B cell (primary cell): ENCODE measurements at regions of chr14 and their contacts with region 1.

Region 1: DNA sequence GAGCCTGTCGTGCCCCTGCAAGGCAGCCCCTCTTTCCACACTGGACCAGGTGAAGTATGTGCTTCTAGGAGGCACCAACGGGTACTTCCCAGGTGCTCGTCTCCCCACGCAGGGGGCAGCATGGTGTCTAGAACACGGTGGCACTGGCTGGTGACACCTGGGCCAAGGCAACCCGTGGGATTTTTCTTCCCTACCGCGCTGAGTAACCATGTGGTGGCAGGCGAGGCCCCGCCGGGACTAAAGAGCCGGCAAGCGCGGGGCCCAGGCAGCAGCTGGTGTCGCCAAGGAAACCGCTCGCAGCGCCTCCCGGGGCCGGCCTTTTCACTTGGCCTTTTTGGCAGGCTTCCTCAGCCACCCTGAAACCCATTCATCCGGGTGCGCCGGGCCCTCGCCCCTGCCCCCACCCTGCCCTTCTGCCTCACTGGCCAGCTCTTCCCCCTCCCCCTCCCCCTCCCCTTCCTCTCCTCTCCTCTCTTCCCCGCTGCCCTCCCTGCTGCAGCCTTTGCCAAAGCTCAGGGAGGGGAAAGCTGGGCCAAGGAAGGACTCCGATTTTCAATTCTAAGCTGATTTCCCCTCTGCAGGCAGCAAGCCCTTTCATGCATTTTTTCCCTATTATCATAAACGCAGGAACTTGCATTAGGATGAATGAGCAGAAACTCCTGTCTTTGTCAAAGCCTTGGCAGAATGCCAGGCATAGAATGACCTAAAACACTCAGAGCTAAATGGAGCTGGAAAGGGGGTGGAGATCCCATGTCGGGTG is 81.2 kb downstream of the IRF2BPL start:
- DNase-seq: peak; percentile 90
- ATAC-seq: peak; percentile 95
- H3K4me3 ChIP-seq: peak overlapping the region in 1 of 5 experiments; percentile 24
- H3K4me3 Mint-ChIP-seq: peak overlapping the region; percentile 64
- H3K27ac ChIP-seq: no peak overlapping the region
- H3K27ac Mint-ChIP-seq: peak overlapping the region; percentile 56
- H3K4me1 ChIP-seq: peaks cover 11 to 15% of the 10 kb centered on the region in 2 donors
- H3K4me1 Mint-ChIP-seq: peaks cover 17% of the 10 kb centered on the region
- H3K27me3 ChIP-seq: no peaks in the 10 kb centered on the region
- H3K27me3 Mint-ChIP-seq: no peaks in the 10 kb centered on the region
- CTCF ChIP-seq: peak; percentile 67

Region 2: GRCh38 chr14:76918751-76919543 is 28.3 kb before region 1 on chr14:
- CTCF ChIA-PET with region 1: interaction called, 17 read pairs
- POLR2A ChIA-PET with region 1: interaction called, 4 read pairs
- intact Hi-C with region 1: no loop called
- DNase-seq: no peak
- ATAC-seq: no peak
- H3K4me3 ChIP-seq: no peak overlapping the region
- H3K4me3 Mint-ChIP-seq: no peak overlapping the region
- H3K27ac ChIP-seq: no peak overlapping the region
- H3K27ac Mint-ChIP-seq: no peak overlapping the region
- H3K4me1 ChIP-seq: peaks cover 24 to 25% of the 10 kb centered on the region in 2 donors
- H3K4me1 Mint-ChIP-seq: peaks cover 20% of the 10 kb centered on the region
- H3K27me3 ChIP-seq: peaks cover 0 to 33% (median 5%) of the 10 kb centered on the region in 4 experiments
- H3K27me3 Mint-ChIP-seq: peaks cover 22% of the 10 kb centered on the region
- CTCF ChIP-seq: no peak

Region 3: DNA sequence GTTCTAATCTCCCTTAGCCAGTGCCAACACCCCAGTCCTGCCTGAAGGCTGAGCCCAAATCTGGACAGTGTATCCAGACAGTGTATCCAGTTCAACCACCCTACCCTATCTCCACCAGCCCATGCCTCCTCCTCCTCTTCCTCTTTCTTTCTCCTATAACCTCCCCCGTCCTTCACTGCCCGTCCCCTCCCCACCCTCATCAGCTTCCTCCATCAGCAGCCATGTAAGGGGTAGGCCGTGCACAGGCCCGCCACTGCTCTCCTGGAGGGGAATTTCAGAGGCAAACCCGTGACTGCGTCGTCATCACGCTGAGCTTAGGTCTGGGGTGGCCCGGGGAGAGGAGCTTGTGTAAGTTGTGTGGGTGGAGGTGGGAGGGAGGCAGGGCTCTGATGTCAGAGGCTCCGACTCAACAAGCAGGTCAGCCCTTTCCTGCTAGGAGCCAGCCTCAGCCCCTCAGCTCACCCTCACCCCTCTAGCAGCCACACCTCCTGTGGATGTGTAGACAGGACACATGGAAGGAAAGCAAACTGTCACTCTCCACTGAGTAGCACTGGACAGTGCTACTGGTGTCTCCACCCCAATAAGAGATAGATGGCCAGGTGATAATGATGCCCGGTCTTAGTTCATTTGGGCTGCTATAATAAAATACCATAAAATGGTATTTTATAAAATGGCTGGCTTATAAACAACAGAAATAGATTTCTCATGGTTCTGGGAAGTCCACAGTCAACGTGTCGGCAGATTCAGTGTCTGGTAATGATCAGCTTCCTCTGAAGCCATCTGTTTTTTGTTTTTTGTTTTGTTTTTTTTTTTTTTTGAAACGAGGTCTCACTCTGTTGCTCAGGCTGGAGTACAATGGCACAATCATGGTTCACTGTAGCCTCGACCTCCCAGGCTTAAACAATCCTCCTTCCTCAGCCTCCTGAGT is 30.8 kb after region 1 on chr14:
- CTCF ChIA-PET with region 1: interaction called, 11 read pairs
- POLR2A ChIA-PET with region 1: no interaction called
- intact Hi-C with region 1: loop called (anchors 5 kb)
- DNase-seq: peak; percentile 96
- ATAC-seq: peak; percentile 94
- H3K4me3 ChIP-seq: no peak overlapping the region
- H3K4me3 Mint-ChIP-seq: peak overlapping the region; percentile 79
- H3K27ac ChIP-seq: peak overlapping the region; percentile 75 to 82
- H3K27ac Mint-ChIP-seq: peak overlapping the region; percentile 93
- H3K4me1 ChIP-seq: peaks cover 18 to 25% of the 10 kb centered on the region in 2 donors
- H3K4me1 Mint-ChIP-seq: peaks cover 25% of the 10 kb centered on the region
- H3K27me3 ChIP-seq: no peaks in the 10 kb centered on the region
- H3K27me3 Mint-ChIP-seq: no peaks in the 10 kb centered on the region
- CTCF ChIP-seq: no peak

Region 4: DNA sequence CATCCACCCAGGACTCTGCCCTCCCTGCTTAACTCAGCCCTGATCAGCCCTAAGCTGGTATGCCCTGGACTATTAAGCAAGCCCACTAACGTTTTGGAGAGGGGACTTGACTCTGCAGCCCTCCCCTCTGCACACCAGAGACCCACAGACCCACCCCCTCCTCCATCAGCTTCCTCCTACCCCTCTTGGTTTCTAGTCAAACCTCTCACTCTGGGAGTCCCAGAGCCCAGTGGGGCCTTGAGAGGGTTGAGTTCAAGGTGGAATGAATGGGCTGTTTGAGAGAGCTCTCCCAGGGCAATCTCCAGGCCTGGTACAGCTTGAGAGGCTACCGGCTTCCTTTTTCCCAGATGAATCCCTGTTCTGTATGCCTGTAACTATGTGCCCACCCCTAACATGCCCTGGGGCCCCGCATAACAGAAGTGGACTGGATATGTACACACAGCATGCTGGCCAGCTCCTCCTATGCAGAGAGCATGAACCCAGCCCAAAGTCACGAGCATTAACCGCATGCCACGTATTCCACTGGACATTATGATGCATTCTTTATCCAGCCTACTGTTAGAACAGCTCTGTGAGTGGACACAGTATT is 37.6 kb after region 1 on chr14:
- CTCF ChIA-PET with region 1: interaction called, 4 read pairs
- POLR2A ChIA-PET with region 1: no interaction called
- intact Hi-C with region 1: loop called (anchors 5 kb)
- DNase-seq: no peak
- ATAC-seq: no peak
- H3K4me3 ChIP-seq: no peak overlapping the region
- H3K4me3 Mint-ChIP-seq: no peak overlapping the region
- H3K27ac ChIP-seq: no peak overlapping the region
- H3K27ac Mint-ChIP-seq: no peak overlapping the region
- H3K4me1 ChIP-seq: peaks cover 4 to 7% of the 10 kb centered on the region in 2 donors
- H3K4me1 Mint-ChIP-seq: peaks cover 10% of the 10 kb centered on the region
- H3K27me3 ChIP-seq: no peaks in the 10 kb centered on the region
- H3K27me3 Mint-ChIP-seq: no peaks in the 10 kb centered on the region
- CTCF ChIP-seq: no peak

Region 5: DNA sequence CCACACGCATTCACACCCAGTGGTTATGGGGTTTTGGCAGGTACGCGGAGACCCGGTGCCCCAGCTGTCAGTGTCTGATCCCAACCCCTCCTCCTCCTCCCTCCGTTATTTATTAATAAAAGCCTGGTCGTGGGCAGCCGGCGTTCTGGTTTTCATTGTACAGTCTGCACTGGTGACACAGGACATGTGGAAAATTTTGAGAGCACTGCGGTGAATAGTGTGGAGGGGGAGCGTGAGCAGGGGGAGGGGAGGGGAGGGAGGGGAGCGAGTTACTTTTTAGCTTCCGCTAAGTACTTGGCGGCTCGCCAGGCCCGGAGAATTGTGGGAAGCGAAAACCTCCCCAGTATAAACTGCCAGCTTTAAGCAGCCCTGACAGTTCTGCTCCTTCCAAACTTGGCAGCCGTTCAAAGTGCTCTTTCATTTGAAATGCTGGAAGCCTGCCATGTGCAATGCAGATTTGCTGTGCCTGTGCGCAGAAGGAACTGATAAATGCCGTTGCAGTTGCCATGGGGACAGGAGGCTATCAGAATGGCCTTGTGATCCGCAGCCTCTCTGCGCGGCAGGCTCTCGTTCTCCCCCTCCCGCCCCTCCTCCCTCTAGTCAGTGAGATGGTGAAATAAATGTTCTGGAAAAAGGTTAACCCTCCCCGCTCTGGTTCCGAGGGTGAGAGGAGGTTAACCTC is 92.9 kb after region 1 on chr14:
- CTCF ChIA-PET with region 1: interaction called, 11 read pairs
- POLR2A ChIA-PET with region 1: no interaction called
- intact Hi-C with region 1: no loop called
- DNase-seq: peak; percentile 94
- ATAC-seq: peak; percentile 72
- H3K4me3 ChIP-seq: peak overlapping the region; percentile 11 to 70 (median 56)
- H3K4me3 Mint-ChIP-seq: peak overlapping the region; percentile 88
- H3K27ac ChIP-seq: peak overlapping the region; percentile 89 to 93
- H3K27ac Mint-ChIP-seq: peak overlapping the region; percentile 98
- H3K4me1 ChIP-seq: peaks cover 71 to 86% of the 10 kb centered on the region in 2 donors
- H3K4me1 Mint-ChIP-seq: peaks cover 79% of the 10 kb centered on the region
- H3K27me3 ChIP-seq: no peaks in the 10 kb centered on the region
- H3K27me3 Mint-ChIP-seq: no peaks in the 10 kb centered on the region
- CTCF ChIP-seq: no peak

Region 6: DNA sequence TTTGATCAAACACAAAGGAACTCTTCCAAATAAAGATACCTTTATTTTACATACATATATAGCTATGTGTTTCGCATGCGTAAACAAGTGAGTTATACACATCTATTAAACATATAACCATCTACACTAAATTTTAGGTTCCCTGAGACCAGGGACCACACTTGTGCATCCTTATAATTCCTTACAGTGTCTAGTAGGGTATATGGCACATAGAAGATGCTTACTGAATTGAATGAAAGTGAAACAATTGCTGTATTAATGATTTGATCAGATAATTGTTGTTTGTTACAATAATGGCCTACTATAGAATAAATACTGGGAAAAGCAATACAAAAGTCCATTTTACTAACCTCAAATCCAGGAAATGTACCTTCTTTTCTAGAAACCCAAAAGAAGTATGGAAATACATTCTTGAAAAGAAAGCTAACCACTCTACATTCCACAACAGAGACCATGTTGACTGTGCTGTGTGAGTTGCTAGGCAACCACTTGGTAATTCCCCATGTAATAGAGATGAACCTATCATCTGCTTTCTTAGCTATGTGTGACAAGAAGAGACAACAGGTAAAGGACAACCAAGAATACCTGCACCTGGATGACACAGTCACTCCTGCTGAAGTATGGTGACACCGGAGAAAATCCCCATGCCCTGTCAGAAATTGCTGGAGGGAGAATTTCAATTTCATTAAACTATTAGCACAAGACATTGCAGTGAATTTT is 138.9 kb after region 1 on chr14:
- CTCF ChIA-PET with region 1: no interaction called
- POLR2A ChIA-PET with region 1: no interaction called
- intact Hi-C with region 1: no loop called
- DNase-seq: peak; percentile 56
- ATAC-seq: peak; percentile 78
- H3K4me3 ChIP-seq: no peak overlapping the region
- H3K4me3 Mint-ChIP-seq: no peak overlapping the region
- H3K27ac ChIP-seq: peak overlapping the region in 1 of 2 donors; percentile 33
- H3K27ac Mint-ChIP-seq: peak overlapping the region; percentile 32
- H3K4me1 ChIP-seq: peaks cover 0 to 7% of the 10 kb centered on the region in 2 donors
- H3K4me1 Mint-ChIP-seq: peaks cover 26% of the 10 kb centered on the region
- H3K27me3 ChIP-seq: no peaks in the 10 kb centered on the region
- H3K27me3 Mint-ChIP-seq: peaks cover 5% of the 10 kb centered on the region
- CTCF ChIP-seq: no peak